Panc1 (cell line): ENCODE measurements at regions of chr22 and their contacts with region 1.

Region 1: GRCh38 chr22:17694193-17694592 is 55.6 kb downstream of the BCL2L13 start:
- DNase-seq: no peak
- ATAC-seq: no peak
- H3K4me3 ChIP-seq: no peak overlapping the region
- H3K27ac ChIP-seq: no peak overlapping the region
- H3K4me1 ChIP-seq: no peaks in the 10 kb centered on the region
- H3K27me3 ChIP-seq: no peaks in the 10 kb centered on the region
- CTCF ChIP-seq: no peak

Region 2: GRCh38 chr22:17606496-17606895 is 87.7 kb before region 1 on chr22:
- CTCF ChIA-PET with region 1: no interaction called
- POLR2A ChIA-PET with region 1: interaction called, 16 read pairs
- in situ Hi-C with region 1: no loop called
- intact Hi-C with region 1: no loop called
- DNase-seq: no peak
- ATAC-seq: no peak
- H3K4me3 ChIP-seq: no peak overlapping the region
- H3K27ac ChIP-seq: no peak overlapping the region
- H3K4me1 ChIP-seq: no peaks in the 10 kb centered on the region
- H3K27me3 ChIP-seq: no peaks in the 10 kb centered on the region
- CTCF ChIP-seq: no peak

Region 3: DNA sequence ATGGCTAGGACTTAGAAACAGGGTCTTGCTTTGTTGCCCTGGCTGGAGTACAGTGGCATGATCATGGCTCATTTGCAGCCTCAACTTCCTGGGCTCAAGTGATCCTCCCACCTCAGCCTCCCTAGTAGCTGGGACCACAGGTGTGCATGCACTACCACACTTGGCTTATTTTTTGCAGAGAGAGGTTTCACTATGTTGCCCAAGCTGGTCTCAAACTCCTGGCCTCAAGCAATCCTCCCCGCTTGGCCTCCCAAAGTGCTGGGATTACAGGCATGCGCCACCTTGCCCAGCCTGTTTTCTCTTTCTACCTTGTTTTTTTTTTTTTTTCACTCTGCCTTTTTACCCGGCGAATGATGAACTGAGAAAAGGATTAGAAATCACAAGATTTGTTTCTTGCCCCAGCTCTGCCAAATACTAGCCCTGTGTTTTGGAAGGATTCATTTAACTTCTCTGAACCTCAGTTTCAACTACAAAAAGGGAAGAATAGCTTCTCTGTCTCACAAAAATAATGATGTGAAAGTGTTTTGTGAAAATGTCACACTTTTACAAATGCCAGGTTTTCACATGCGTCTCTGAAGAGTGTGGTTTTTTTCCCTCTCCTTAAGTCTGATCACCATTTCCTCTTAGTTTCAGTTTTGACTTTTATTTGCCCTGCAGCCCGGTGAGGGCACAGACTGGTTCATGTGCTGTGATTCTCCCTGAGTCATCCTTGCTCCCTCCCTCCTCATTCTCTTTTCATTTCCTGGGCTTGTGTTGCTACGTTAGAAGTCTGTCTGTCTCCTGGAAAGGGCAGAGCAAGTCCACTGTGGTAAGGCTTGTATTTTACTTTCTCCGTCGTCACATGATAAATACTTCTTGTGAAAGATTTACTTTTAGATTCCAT is 12.1 kb after region 1 on chr22:
- CTCF ChIA-PET with region 1: no interaction called
- POLR2A ChIA-PET with region 1: no interaction called
- in situ Hi-C with region 1: no loop called
- intact Hi-C with region 1: no loop called
- DNase-seq: peak; percentile 83
- ATAC-seq: peak; percentile 98
- H3K4me3 ChIP-seq: peak overlapping the region; percentile 24 to 49
- H3K27ac ChIP-seq: peak overlapping the region; percentile 75
- H3K4me1 ChIP-seq: peaks cover 18% of the 10 kb centered on the region
- H3K27me3 ChIP-seq: no peaks in the 10 kb centered on the region
- CTCF ChIP-seq: no peak